ENCODE measurements at regions of chr1 and their contacts with region 1.

Region 1: GRCh38 chr1:89632657-89633247 is at the start of gene LRRC8C:
- DNase-seq: peak; percentile 86
- H3K4me3 ChIP-seq: peak within 1 kb of the TSS; percentile 95
- H3K27ac ChIP-seq: peak within 1 kb of the TSS; percentile 56
- H3K4me1 ChIP-seq: peaks cover 25% of the 10 kb centered on the region
- CTCF ChIP-seq: peak; percentile 57; the same call in 1 of the 2 replicates
- total RNA-seq, gene LRRC8C: 4.1 and 6.0 TPM in 2 replicates

Region 2: DNA sequence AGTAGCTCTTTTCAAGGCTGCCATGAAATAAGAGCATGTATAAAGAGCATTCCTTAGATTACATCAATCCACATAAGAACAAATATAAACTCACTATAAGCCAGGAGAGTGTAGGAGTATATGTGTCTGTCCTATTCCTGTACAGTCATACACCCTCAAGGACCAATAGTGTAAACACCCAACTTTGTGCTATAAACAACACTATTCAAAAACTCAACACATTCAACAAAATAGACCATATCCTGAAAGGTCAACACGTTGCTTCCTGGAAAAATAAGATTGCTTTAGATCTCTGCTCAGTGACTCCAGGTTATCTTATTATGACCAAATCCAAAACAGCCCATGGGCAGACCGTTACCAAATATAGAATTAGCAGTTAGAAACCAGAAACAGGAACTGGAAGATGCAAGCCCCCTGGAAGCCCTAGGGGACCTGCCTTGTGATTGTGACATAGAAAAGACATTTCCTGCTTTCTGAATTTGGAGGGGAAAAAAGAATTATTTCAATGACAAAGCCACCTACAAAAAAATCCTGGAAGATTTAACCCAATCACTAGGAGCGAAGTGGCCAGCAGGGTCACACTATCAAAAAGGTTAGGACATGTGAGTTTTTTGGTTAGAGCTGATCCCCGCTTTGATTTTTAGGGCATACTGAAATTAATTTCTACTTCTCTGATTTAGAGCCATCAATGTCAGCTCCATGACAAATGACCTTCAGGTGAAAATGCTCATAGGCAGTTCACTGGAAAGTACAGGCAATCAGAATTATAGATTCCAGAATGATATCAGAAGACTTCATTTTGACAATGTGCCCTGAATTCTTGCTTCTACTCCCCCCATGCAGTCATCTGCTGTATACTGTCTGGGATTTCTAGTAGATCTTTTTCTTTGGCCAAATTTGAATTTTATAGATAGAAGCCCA is 60.1 kb after region 1 on chr1:
- CTCF ChIA-PET with region 1: no interaction called
- POLR2A ChIA-PET with region 1: interaction called, 3 read pairs
- intact Hi-C with region 1: loop called (anchors 5 kb)
- DNase-seq: peak; percentile 80
- H3K4me3 ChIP-seq: peak overlapping the region; percentile 30
- H3K27ac ChIP-seq: peak overlapping the region; percentile 81
- H3K4me1 ChIP-seq: peaks cover 51% of the 10 kb centered on the region
- CTCF ChIP-seq: no peak

Region 3: DNA sequence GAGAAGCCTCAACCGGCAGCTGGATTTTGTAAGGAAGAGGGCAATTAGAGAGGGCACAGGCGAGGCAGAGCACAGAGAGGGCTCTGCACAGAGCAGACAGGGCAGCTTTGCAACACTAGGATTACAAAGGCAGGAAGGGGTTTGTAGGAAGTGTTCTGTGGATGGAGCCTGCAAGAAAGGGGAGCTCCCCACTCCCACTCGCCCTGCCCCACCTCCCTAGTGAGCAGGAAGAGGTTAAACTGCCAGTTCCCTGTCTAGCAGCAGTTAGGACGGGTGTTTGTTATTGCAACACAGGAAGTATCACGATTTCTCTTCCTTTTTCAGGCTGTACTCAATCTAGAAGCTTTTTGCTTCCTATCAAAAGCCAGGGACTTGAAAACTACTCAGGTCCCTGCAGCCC is 124.8 kb after region 1 on chr1:
- CTCF ChIA-PET with region 1: interaction called, 5 read pairs
- POLR2A ChIA-PET with region 1: interaction called, 90 read pairs
- intact Hi-C with region 1: loop called (anchors 1 kb)
- DNase-seq: peak; percentile 69
- H3K4me3 ChIP-seq: peak overlapping the region; percentile 25
- H3K27ac ChIP-seq: peak overlapping the region; percentile 18
- H3K4me1 ChIP-seq: peaks cover 18% of the 10 kb centered on the region
- CTCF ChIP-seq: no peak

Region 4: DNA sequence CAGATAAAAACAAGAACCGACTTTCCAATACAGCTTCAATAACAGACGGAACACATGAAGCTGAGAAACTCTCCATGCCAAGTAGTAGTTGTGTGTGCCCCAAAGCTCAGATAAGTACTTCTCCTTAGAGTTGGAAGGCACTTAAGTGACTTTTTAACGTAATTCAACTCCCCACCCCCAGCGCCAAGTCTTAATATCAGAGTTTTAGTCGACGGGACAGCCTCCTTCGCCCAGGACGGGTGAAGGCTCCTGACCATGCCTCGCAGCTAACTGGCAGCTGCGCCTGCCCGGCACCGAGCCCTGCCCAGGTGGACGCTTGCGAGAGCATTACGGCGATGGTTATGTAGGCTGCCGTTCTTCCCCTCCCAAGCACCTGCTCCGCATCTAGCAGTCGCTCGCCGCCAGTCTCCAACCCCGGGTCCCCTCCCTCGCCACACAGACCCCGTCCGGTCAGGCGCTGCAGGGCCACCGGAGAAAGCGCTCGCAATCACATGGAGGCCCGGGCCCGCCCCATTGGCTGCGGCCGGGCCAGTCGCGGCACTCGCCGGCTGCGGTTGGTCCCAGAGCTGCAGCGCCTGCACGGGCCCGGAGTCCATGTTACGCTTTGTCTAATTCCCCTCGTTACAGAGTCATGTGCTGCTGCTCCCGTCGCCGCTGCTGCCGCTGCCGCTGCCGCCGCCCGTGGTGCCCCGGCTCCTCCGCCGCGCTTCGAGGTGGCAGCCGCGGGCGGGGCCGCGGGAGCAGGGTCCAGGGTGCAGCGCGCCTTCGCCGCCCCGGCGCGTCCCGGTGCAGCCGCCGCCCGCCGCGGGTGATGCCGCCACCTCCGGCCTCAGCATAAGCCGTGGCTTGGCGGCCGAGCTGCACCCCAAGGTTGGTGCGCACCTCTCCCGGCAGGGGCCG is 187.9 kb after region 1 on chr1 and contains the start of gene LRRC8D:
- CTCF ChIA-PET with region 1: no interaction called
- POLR2A ChIA-PET with region 1: interaction called, 3 read pairs
- intact Hi-C with region 1: loop called (anchors 2 kb)
- DNase-seq: peak; percentile 89
- H3K4me3 ChIP-seq: peak within 1 kb of the TSS; percentile 74
- H3K27ac ChIP-seq: peak within 1 kb of the TSS; percentile 89
- H3K4me1 ChIP-seq: peaks cover 37% of the 10 kb centered on the region
- CTCF ChIP-seq: no peak
- total RNA-seq, gene LRRC8D: 19.3 and 23.8 TPM in 2 replicates

Measured in OCI-LY7 (cell line).